ENCODE measurements at regions of chr17 and their contacts with region 1.

Region 1: DNA sequence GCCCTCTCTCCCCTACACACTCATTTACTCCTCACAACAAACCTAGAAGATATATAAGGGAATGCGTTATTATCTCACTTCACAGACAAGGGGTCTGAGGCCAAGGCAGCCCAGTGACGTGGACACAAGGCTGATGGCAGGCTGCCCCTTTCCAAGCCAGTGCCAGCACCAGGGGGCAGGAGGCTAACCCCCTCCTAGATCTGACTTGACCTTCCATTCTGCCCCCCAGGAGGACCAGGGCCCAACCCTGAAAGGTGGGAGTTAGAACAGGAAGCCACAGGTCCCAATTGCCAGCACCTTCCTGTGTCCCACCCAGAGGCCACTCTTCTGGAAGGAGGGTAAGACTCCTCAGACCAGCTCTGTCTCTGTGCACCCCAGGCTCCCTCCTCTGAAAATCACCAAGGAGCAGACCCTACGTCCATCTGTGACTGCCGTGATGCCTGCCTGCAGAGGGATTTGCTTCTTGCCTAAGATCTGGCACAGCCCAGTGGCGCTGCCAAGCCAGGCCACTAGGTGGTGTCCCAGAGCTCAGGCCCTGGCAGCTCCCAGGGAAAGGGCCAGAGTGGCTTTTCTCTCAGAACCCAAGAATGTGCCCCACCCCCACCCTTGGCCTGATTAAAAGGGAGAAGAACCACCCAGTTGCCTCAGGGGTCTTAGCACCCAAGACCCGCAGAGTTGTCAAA is 42.4 kb upstream of the MRPS23 start:
- DNase-seq: peak; percentile 91
- H3K4me3 Mint-ChIP-seq: peak overlapping the region; percentile 64
- H3K27ac Mint-ChIP-seq: peak overlapping the region; percentile 87
- H3K4me1 Mint-ChIP-seq: peaks cover 41% of the 10 kb centered on the region
- H3K27me3 Mint-ChIP-seq: no peaks in the 10 kb centered on the region
- CTCF ChIP-seq: peak; percentile 96

Region 2: DNA sequence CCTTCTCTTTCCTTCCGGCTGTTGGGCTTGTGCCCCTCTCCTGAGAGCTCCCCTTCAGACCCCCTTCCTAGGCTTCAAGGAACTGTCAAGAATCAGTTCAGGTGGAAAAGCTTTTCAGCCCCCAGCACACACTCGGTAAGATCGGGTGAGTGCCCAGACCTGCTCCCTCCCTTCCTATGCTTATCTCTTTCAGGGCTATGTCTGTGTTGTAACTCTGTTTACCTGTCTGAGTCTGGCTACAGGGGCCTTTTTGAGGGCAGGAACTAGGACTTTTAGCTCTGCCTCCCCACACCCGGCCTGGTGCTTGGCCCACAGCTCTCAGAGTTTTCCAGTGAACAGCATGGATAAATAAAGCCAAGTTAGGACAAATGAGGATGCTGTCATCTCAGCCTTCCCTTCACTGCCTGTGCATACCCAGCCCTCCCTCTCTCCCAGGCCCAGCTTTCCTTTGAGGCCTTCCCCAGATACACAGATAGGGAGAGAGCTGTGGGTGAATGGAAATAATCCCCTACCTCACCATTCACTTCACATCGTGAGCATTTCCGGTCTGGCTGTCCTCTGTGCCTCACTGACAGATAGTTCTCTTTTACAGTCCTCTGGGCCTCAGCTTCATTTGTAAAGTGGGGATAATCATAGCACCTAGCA is 36.8 kb before region 1 on chr17:
- CTCF ChIA-PET with region 1: interaction called, 14 read pairs
- POLR2A ChIA-PET with region 1: interaction called, 13 read pairs
- intact Hi-C with region 1: loop called (anchors 5 kb)
- DNase-seq: no peak
- H3K4me3 Mint-ChIP-seq: no peak overlapping the region
- H3K27ac Mint-ChIP-seq: peak overlapping the region; percentile 3
- H3K4me1 Mint-ChIP-seq: peaks cover 38% of the 10 kb centered on the region
- H3K27me3 Mint-ChIP-seq: no peaks in the 10 kb centered on the region
- CTCF ChIP-seq: no peak

Region 3: DNA sequence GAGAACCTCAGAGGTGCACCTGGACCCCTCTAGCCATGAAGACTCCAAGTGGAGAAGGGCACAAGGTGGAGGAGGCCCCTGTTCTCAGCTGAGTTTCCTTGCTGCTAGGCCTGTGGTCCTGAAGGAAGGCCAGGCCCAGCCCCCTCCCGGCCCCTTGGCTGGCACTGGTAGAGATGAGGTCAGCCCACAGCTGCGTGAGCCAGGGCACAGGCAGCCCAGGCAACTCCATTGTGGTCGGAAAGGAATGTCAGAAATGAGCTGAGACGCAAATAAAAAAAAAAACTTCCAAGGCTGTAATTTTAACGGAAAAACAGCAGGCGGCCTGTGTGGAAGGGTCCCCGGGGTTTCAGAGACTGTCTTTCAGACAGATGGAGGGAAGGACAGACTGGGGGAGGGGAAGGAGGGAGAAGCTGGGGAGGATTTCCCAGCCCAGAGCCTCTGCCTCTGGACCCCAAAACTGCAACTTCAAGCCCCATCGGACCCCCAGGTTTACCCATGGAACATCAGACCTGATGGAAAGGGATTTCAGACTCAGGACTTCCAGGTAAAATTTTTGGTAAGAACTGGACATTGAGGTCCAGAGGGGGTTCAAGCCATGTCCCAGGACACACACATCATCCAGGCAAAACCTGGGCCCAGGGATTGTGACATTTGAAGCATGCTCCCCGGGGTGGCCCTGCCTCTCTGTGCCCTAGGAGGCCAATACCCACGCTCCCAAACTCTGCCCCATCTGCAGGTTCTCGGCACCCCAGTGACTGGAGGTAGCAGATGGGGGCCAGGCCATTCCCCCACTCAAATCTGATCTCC is 16.8 kb before region 1 on chr17:
- CTCF ChIA-PET with region 1: interaction called, 81 read pairs
- POLR2A ChIA-PET with region 1: interaction called, 23 read pairs
- intact Hi-C with region 1: loop called (anchors 1 kb)
- DNase-seq: peak; percentile 94
- H3K4me3 Mint-ChIP-seq: peak overlapping the region; percentile 41
- H3K27ac Mint-ChIP-seq: peak overlapping the region; percentile 51
- H3K4me1 Mint-ChIP-seq: peaks cover 45% of the 10 kb centered on the region
- H3K27me3 Mint-ChIP-seq: no peaks in the 10 kb centered on the region
- CTCF ChIP-seq: peak; percentile 52